ENCODE measurements at regions of chr20 and their contacts with region 1.

Region 1: DNA sequence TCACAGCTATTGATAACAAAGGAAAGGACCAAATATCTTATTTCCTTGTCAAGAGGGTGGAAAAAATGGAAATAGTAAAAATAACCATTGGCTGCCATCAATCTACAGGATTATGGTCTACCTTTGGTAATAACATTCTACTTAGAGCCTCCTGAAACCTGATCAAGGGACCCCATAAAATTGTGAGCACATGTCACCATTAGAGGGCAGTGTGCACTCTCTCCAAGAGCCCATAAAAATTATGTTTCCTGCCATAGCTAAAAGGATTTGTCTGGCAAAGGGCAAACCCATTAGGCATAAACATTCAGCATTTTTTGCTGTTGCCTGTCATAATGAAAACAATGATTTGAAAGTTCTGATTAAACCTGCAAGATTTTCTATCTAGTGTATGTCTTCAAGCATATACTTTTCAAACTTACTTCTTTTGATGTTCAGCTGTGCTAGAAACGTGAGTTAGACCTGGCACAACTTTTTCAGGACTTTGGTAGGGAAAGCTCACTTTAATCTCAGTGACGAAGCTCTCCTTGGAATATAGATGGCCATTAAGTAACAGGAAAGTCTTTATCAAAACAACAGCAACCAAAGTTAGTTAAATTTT is 120.7 kb upstream of the ZFP64 start:
- DNase-seq: peak; percentile 22
- H3K4me3 ChIP-seq: no peak overlapping the region
- H3K27ac ChIP-seq: no peak overlapping the region
- H3K4me1 ChIP-seq: no peaks in the 10 kb centered on the region
- H3K27me3 ChIP-seq: no peaks in the 10 kb centered on the region
- CTCF ChIP-seq: peak; percentile 41 to 61 (median 53)
- EP300 ChIP-seq: no peak
- POLR2A ChIP-seq: no peak

Region 2: DNA sequence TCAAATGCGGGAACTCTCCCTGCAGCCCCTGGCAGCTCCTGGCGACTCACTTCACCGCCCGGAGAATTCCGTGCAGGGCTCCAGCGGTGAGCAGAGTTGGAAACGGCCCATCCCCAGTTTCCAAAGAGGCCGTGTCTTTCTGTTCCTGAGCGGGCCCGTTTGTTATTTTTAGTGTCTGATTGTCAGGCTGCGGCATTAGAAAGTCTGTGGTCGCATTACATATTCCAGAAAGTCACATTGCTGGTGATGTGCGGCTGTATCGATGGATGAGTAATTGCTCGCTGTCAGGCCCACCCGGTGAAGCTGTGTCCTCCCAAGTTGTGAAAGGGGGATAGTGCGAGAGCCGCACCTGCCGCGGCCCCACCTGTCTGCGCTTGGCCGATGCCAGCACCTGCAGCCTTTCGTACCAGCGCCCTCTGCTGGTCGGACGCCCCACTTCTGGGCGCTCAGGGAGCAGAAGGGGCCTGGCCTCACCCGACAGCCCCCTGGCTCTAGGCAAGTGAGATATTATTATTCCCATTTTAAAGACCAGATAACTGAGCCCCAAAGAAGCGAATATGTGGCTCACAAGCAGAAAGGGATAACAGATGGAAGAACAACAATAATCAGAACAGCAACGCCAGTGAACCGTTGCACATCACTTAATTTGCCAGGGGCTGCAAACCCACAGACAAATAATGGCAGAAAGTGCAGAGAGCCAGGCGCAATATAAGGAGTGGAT is 904.8 kb after region 1 on chr20:
- in situ Hi-C with region 1: loop called in 1 of 4 experiments (anchors 25 kb)
- intact Hi-C with region 1: no loop called
- DNase-seq: peak; percentile 70
- H3K4me3 ChIP-seq: peak overlapping the region in 1 of 4 donors; percentile 12
- H3K27ac ChIP-seq: no peak overlapping the region
- H3K4me1 ChIP-seq: peaks cover 0 to 3% (median 0%) of the 10 kb centered on the region in 4 donors
- H3K27me3 ChIP-seq: peaks cover 11% of the 10 kb centered on the region
- CTCF ChIP-seq: peak; percentile 74 to 85 (median 82)
- EP300 ChIP-seq: no peak
- POLR2A ChIP-seq: no peak

Measured in transverse colon (tissue), 4 donors.